Left cardiac atrium (tissue), 4 donors: ENCODE measurements at regions of chr1 and their contacts with region 1.

Region 1: GRCh38 chr1:169601093-169601881 is 15.0 kb upstream of the F5 start:
- DNase-seq: no peak
- ATAC-seq: peak in 1 of 2 donors; percentile 53

Region 2: DNA sequence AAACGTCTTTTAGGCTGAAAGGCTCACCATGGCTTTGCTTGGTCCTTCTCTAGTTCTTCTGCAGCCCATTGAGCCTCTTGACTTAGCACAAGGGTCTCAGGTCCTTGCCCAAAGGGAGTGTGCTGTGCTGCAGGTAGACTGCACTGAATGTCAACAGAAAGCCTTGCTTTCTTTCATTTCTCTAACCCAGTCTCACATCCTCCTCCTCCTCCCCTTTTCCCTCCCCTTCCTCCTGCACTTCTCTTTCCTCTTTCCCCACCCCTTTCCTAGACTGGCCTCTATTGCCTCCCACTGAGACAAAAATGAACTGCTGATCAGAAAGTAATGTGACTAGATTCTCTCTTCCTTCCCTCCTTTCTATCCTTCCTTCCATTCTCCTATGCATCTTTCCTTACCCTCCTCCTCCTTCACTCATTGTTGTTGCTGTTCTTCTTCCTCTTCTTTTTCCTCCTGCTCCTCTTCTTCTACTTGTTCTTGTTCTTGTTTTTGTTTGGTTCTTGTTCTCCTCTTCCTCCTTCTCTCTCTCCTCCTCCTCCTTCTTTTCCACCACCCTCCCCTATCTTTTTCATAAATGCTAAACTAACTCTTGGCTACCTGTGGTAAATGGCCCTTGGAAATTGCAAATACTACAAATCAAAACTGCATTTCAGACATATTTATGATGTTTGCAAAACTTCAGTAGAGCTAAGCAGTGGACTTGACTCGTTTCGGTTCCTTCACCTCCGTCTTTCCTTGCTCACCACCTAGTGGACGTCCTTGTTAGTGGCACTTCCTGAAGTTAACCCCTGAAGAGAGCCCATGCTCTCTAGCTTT is 110.4 kb after region 1 on chr1 and contains the start of gene SELL:
- intact Hi-C with region 1: loop called (anchors 2 to 5 kb)
- DNase-seq: peak; percentile 56
- ATAC-seq: peak; percentile 94 to 97
- total RNA-seq, gene SELL: 3.0 to 4.7 TPM

Region 3: GRCh38 chr1:169809370-169810095 is 208.2 kb after region 1 on chr1:
- intact Hi-C with region 1: loop called in 1 of 2 experiments (anchors 5 kb)
- DNase-seq: peak; percentile 23
- ATAC-seq: no peak

Region 4: GRCh38 chr1:170114906-170115305 is 513.6 kb after region 1 on chr1:
- intact Hi-C with region 1: no loop called
- DNase-seq: no peak
- ATAC-seq: no peak